ENCODE measurements at regions of chr17 and their contacts with region 1.

Region 1: DNA sequence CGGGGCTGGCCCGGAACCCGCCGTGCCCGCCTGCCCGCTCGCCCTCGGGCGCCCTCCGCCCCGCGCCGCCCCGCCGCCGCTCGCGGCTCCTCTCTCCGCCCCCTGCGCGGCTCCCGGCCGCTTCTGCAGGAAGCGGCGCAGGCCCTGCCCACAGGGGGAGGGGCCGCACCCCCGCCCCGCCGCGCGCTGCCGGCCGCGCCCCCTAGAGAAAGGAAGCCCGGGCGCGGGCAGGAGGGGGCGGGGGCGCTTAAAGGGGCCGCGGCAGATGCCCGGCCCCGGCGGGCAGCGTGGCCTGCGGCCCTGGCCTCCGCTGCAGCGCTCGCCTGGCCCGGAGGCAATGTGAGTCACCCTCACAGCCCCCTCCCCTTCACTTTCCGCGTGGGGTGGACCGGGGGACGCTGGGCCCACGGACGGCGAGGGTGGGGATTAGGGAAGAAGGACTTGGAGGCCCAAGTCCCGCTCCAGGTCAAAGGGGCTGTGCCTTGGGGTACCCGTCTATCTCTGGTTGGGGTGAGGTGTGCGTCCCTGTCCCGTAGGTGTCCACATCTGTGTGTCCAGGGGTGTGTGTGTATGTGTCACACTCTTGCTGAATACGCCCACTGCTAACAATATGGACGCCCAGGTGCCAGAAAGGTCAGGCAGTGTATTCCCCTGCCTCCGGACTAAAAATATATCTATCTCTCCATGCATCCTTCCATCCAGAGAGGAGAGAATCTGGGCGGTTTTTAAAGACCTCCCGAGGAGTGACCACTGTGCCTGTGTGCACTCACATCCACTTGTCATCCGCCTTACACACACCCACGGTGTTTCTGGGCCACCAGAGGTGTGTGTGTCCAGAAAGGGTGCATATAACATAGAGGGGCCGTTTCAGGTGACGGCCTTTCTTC is at the start of gene GIT1:
- DNase-seq: peak; percentile 85
- H3K4me3 ChIP-seq: peak within 1 kb of the TSS; percentile 72 to 76
- H3K27ac ChIP-seq: peak within 1 kb of the TSS; percentile 77 to 79
- H3K4me1 ChIP-seq: peaks cover 24% of the 10 kb centered on the region
- H3K27me3 ChIP-seq: no peaks in the 10 kb centered on the region
- CTCF ChIP-seq: peak in 3 of 4 experiments; percentile 23 to 41 (median 34)
- POLR2A ChIP-seq: peak; percentile 52
- total RNA-seq, gene GIT1: 29.1 to 86.9 TPM

Region 2: GRCh38 chr17:29687596-29687995 is 97.8 kb after region 1 on chr17:
- intact Hi-C with region 1: no loop called
- DNase-seq: no peak
- H3K4me3 ChIP-seq: no peak overlapping the region
- H3K27ac ChIP-seq: no peak overlapping the region
- H3K4me1 ChIP-seq: no peaks in the 10 kb centered on the region
- H3K27me3 ChIP-seq: no peaks in the 10 kb centered on the region
- CTCF ChIP-seq: no peak
- POLR2A ChIP-seq: no peak

Region 3: DNA sequence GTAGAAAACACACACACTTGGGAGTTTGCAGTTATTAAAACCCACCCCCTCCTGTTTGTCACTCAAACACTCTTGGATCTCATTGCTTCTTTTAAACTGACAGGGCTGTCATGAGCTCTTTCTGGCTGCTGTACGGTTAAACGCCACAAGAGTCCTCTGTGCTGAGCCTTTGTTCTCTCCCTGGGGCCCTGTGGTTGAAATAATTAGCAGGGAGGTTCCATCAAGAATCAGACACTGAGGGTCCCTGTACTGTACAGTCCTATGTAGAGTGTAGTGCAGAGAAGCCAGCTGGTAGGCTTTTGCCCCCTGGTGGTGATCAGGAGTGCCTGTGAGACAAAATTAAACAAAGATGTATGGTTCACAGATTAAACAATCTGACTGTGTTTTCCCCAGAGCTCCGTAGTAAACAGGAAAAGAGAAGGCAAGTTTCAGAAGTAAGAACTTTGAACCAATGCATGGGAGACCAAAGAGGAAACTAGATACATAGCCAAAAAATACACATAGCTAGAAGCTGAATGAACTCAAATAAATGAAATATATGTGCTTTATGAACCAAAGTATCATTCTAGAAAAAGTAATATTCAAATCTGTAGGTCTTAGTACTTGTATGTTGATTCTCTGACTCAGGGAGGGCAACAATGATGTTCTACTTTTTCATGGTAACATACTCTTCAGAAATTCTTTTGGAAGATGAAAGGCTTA is 341.6 kb after region 1 on chr17:
- intact Hi-C with region 1: loop called (anchors 2 kb)
- DNase-seq: peak; percentile 68
- H3K4me3 ChIP-seq: peak overlapping the region in 1 of 2 donors; percentile 81
- H3K27ac ChIP-seq: no peak overlapping the region
- H3K4me1 ChIP-seq: peaks cover 3% of the 10 kb centered on the region
- H3K27me3 ChIP-seq: no peaks in the 10 kb centered on the region
- CTCF ChIP-seq: peak; percentile 70 to 88 (median 82)
- POLR2A ChIP-seq: no peak